H1 (cell line): ENCODE measurements at regions of chr6 and their contacts with region 1.

Region 1: GRCh38 chr6:43308101-43308989 is at the start of gene CRIP3:
- DNase-seq: peak; percentile 60 to 86
- H3K4me3 ChIP-seq: peak within 1 kb of the TSS; percentile 51 to 74 (median 66)
- H3K27ac ChIP-seq: no peak within 1 kb of the TSS
- H3K4me1 ChIP-seq: peaks cover 9 to 15% (median 9%) of the 10 kb centered on the region in 4 experiments
- H3K27me3 ChIP-seq: 0 out of 7 replicates have a peak, but pooled peaks cover 0 to 2% (median 0%) of the 10 kb centered on the region in 4 experiments
- CTCF ChIP-seq: peak in 2 of 3 experiments; percentile 51 to 76; a peak in 2 of 4 replicates
- EP300 ChIP-seq: no peak
- POLR2A ChIP-seq: peak in 1 of 2 experiments; percentile 57; a peak in 2 of 3 replicates
- RAD21 ChIP-seq: peak; percentile 31 to 48; a peak in 3 of 4 replicates
- total RNA-seq, gene CRIP3: 37.6 and 46.3 TPM in 2 replicates

Region 2: GRCh38 chr6:42963855-42964605 is 344.3 kb before region 1 on chr6:
- CTCF ChIA-PET with region 1: no interaction called
- POLR2A ChIA-PET with region 1: no interaction called
- DNase-seq: peak; percentile 64 to 82
- H3K4me3 ChIP-seq: no peak overlapping the region
- H3K27ac ChIP-seq: no peak overlapping the region
- H3K4me1 ChIP-seq: peaks cover 0 to 10% (median 6%) of the 10 kb centered on the region in 4 experiments; a peak in 5 of 7 replicates
- H3K27me3 ChIP-seq: peaks cover 0 to 13% (median 10%) of the 10 kb centered on the region in 4 experiments; a peak in 5 of 7 replicates
- CTCF ChIP-seq: peak in 2 of 3 experiments; percentile 50 to 63; a peak in 3 of 4 replicates
- EP300 ChIP-seq: no peak
- POLR2A ChIP-seq: no peak
- RAD21 ChIP-seq: peak; percentile 69 to 79

Region 3: DNA sequence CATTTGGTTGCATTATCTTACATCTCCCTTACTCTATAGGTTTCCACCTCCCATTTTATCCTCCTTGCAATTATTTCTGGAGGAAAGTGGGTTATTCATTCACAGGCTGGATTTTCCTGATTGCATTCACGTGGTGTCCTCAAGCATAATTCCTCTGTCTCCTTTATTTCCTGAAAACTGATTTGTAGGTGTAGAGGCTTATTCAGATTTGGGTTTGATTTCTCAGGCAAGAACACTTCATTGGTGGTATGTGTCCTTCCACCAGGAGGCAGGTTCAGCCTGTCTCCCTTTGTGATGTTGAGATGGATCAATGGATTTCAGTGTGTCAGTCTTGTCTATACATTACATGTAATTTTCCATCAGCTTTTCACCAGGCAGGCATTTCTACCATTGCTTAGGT is 96.4 kb before region 1 on chr6:
- CTCF ChIA-PET with region 1: no interaction called
- POLR2A ChIA-PET with region 1: no interaction called
- DNase-seq: no peak
- H3K4me3 ChIP-seq: no peak overlapping the region
- H3K27ac ChIP-seq: no peak overlapping the region
- H3K4me1 ChIP-seq: no peaks in the 10 kb centered on the region; a peak in 1 of 7 replicates
- H3K27me3 ChIP-seq: no peaks in the 10 kb centered on the region
- CTCF ChIP-seq: peak in 1 of 3 experiments; percentile 43; a peak in 1 of 4 replicates
- EP300 ChIP-seq: no peak
- POLR2A ChIP-seq: no peak
- RAD21 ChIP-seq: peak; percentile 27 to 42; a peak in 2 of 4 replicates

Region 4: GRCh38 chr6:43263314-43264178 is 44.8 kb before region 1 on chr6:
- CTCF ChIA-PET with region 1: interaction called, 27 read pairs
- POLR2A ChIA-PET with region 1: interaction called, 3 read pairs
- DNase-seq: peak; percentile 49 to 90
- H3K4me3 ChIP-seq: no peak overlapping the region
- H3K27ac ChIP-seq: no peak overlapping the region
- H3K4me1 ChIP-seq: peaks cover 0 to 15% (median 5%) of the 10 kb centered on the region in 4 experiments; a peak in 6 of 7 replicates
- H3K27me3 ChIP-seq: peaks cover 2 to 9% (median 7%) of the 10 kb centered on the region in 4 experiments
- CTCF ChIP-seq: peak in 2 of 3 experiments; percentile 91 to 98; a peak in 3 of 4 replicates
- EP300 ChIP-seq: no peak
- POLR2A ChIP-seq: no peak
- RAD21 ChIP-seq: peak; percentile 96 to 97

Region 5: GRCh38 chr6:43355862-43356590 is 47.7 kb after region 1 on chr6:
- CTCF ChIA-PET with region 1: interaction called, 11 read pairs
- POLR2A ChIA-PET with region 1: interaction called, 5 read pairs
- DNase-seq: no peak
- H3K4me3 ChIP-seq: no peak overlapping the region; a peak in 1 of 8 replicates
- H3K27ac ChIP-seq: no peak overlapping the region
- H3K4me1 ChIP-seq: peaks cover 0 to 2% (median 0%) of the 10 kb centered on the region in 4 experiments; a peak in 2 of 7 replicates
- H3K27me3 ChIP-seq: no peaks in the 10 kb centered on the region
- CTCF ChIP-seq: peak; percentile 39 to 74 (median 66)
- EP300 ChIP-seq: no peak
- POLR2A ChIP-seq: no peak
- RAD21 ChIP-seq: peak; percentile 67 to 76

Region 6: DNA sequence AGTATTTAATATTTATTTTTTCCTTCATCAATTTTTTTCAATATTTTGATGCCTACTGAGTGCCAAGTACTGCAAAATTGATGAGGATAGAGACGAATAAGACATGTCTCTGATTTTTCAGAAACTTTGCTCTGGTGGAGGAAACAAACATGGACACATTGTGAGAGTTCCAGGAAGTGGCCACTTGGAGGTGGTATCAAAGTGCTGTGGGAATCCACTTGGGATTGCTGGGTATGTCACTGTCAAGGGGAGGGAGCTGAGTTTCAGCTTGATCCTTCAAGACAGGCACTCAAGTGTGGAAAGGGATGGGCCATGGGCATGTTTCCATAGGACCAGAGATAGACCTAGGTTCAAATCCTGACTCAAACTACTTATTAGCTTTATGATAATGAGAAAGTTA is 94.5 kb after region 1 on chr6:
- CTCF ChIA-PET with region 1: no interaction called
- POLR2A ChIA-PET with region 1: no interaction called
- DNase-seq: no peak
- H3K4me3 ChIP-seq: no peak overlapping the region
- H3K27ac ChIP-seq: no peak overlapping the region
- H3K4me1 ChIP-seq: no peaks in the 10 kb centered on the region
- H3K27me3 ChIP-seq: no peaks in the 10 kb centered on the region
- CTCF ChIP-seq: no peak
- EP300 ChIP-seq: no peak
- POLR2A ChIP-seq: no peak
- RAD21 ChIP-seq: no peak